ENCODE measurements at regions of chr1 and their contacts with region 1.

Region 1: GRCh38 chr1:204941421-204942338 is 71.0 kb downstream of the NFASC start:
- H3K4me3 ChIP-seq: no peak overlapping the region
- H3K27ac ChIP-seq: no peak overlapping the region
- H3K4me1 ChIP-seq: no peaks in the 10 kb centered on the region
- CTCF ChIP-seq: peak; percentile 80

Region 2: GRCh38 chr1:204565617-204566582 is 375.8 kb before region 1 on chr1:
- CTCF ChIA-PET with region 1: interaction called, 10 read pairs
- POLR2A ChIA-PET with region 1: no interaction called
- H3K4me3 ChIP-seq: no peak overlapping the region
- H3K27ac ChIP-seq: no peak overlapping the region
- H3K4me1 ChIP-seq: no peaks in the 10 kb centered on the region
- CTCF ChIP-seq: 0 out of 2 replicates have a peak, but pooled peaks have one; percentile 47

Region 3: GRCh38 chr1:204812832-204813231 is 128.8 kb before region 1 on chr1:
- CTCF ChIA-PET with region 1: interaction called, 179 read pairs
- POLR2A ChIA-PET with region 1: no interaction called
- H3K4me3 ChIP-seq: no peak overlapping the region
- H3K27ac ChIP-seq: no peak overlapping the region
- H3K4me1 ChIP-seq: no peaks in the 10 kb centered on the region
- CTCF ChIP-seq: no peak

Region 4: GRCh38 chr1:204828338-204828850 is 113.3 kb before region 1 on chr1:
- CTCF ChIA-PET with region 1: interaction called, 28 read pairs
- POLR2A ChIA-PET with region 1: no interaction called
- H3K4me3 ChIP-seq: peak overlapping the region; percentile 41
- H3K27ac ChIP-seq: no peak overlapping the region
- H3K4me1 ChIP-seq: no peaks in the 10 kb centered on the region
- CTCF ChIP-seq: no peak

Region 5: DNA sequence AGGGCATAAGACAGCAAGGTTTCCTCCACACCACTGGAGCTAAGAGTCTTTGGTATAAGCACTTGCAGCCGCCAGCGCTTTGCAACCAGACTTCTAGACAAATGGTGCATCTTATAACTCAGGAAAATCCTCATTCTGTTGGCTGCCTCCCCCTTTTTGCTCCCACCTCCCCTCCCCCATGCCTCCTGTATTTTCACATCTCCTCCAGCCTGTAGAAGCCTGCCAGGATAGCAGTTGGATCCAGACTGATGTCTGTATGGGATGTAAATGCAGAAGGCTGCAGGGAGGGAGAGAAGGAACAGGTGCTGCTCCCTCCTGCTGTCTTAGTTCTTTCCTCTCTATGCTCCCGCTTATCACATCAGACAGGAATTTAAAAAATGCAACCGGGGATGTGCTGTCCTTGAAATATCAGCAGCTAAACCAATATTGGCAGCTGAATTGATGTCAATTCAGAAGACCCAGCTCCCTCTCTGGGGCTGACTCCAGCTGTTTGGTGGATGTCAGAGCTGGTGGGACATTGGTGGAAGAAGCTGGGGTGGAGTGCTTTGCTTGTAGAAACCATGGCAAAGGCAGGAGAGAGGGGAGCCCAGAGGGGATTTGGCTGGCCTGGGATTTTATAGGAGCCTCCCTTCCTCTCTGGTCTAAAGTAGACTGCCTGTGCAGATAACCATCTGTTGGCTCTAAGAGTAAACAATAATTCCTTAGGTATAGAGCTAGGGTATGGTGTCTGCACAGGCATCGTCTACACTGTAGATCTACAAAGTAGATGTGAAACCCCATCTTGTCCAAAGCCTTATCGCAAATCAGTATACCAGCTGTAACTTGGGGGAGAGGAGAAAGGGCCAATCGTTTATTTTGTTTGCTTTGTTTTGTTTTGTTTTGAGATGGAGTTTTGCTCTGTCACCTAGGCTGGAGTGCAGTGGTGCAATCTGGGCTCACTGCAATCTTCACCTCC is 17.4 kb before region 1 on chr1:
- CTCF ChIA-PET with region 1: interaction called, 60 read pairs
- POLR2A ChIA-PET with region 1: no interaction called
- H3K4me3 ChIP-seq: no peak overlapping the region
- H3K27ac ChIP-seq: no peak overlapping the region
- H3K4me1 ChIP-seq: peaks cover 3% of the 10 kb centered on the region; the same call in 1 of the 2 replicates
- CTCF ChIP-seq: no peak

Region 6: GRCh38 chr1:204967451-204967850 is 25.8 kb after region 1 on chr1:
- CTCF ChIA-PET with region 1: interaction called, 28 read pairs
- POLR2A ChIA-PET with region 1: no interaction called
- H3K4me3 ChIP-seq: no peak overlapping the region
- H3K27ac ChIP-seq: no peak overlapping the region
- H3K4me1 ChIP-seq: no peaks in the 10 kb centered on the region
- CTCF ChIP-seq: no peak

Measured in HEK293 (cell line).